Left cardiac atrium (tissue), 4 donors: ENCODE measurements at regions of chr3 and their contacts with region 1.

Region 1: DNA sequence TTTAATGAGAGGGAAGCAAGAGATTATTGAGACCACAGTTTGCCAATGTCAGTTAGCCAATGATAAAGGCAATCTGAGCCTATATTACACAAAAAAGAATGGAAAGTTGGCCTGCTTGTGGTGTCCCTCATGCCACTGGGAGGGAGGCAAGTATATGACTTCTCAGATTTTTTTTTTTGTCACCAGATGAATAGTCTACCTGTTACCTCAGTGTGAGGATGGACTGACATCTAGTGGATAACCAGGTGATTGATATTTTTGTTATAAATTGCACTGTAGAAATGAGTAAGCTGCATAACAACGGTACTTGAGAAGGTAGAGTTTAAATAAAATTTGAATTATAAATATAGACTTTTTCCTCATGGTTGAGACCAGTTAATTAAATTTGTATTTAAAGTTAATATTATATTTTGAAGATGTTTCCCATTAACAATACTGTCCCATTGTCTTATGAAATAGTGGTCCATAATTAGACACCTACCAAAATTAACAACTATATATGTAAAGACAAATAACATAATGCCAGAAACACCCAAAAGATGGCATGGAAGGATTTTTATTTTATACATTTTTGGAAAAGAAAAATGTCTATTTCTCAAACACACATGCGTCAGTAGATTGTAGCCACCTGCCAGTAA is 237.8 kb upstream of the GADL1 start:
- DNase-seq: no peak
- ATAC-seq: peak in 1 of 2 donors; percentile 52

Region 2: GRCh38 chr3:30768703-30769685 is 363.3 kb before region 1 on chr3:
- intact Hi-C with region 1: loop called (anchors 1 to 10 kb)
- DNase-seq: peak; percentile 79
- ATAC-seq: peak; percentile 19 to 41

Region 3: DNA sequence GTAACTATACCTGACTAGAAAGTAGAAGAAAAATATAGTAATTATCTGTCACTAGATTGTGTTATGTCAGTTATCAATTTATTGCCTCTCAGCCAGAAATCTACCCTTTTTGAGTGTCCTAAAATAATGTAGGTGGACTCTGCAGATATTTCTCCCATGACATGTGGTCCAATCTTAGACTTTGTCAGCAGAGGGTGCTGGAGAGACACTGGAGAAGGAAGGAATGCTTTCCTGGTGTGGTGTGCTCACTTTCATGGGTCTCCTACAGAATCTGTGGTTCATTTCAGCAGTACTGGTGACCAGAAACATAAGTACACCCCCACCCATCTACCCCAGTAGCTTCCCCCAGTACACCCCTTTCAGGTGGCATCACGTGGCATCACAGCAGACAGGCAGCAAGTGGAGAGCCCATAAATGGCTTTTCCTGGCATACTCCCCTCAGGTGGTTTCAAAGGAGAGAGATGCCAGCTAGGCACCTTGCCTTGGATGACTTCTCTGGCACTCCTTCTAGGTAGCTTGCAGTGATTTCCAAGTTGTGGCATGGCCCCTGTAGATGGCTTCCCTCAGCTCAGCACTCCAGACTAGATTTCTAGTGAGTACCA is 352.5 kb before region 1 on chr3:
- intact Hi-C with region 1: loop called in 1 of 2 experiments (anchors 10 kb)
- DNase-seq: no peak
- ATAC-seq: no peak